Mammary epithelial cell (primary cell): ENCODE measurements at regions of chr16 and their contacts with region 1.

Region 1: GRCh38 chr16:667780-668518 is at the start of gene RHOT2:
- DNase-seq: peak; percentile 86
- H3K4me3 ChIP-seq: peak within 1 kb of the TSS; percentile 79 to 92 (median 88)
- H3K27ac ChIP-seq: peak within 1 kb of the TSS; percentile 51
- H3K4me1 ChIP-seq: peaks cover 26% of the 10 kb centered on the region
- H3K27me3 ChIP-seq: no peaks in the 10 kb centered on the region
- CTCF ChIP-seq: peak; percentile 59 to 64
- total RNA-seq, gene RHOT2: 48.8 to 154 TPM

Region 2: DNA sequence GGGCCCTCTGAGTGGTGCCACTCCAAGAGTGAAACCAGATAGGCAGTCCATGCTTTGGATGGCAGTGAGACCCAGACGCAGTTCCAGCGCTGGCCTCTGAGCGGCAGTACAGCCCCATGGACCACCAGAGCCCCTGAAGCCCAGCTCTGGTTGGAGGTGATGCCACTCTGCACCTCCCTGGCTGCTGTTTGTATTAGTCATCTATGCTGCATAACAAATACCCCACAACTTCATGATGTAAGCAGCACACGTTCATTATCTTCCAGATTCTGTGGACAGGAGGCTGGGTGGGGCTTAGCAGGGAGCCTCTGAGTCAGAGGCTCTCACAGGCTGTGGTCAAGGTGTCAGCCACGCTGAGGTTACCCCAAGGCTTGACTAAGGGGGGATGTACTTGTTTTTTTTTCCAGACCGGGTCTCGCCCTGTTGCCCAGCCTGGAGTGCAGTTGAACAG is 276.0 kb before region 1 on chr16:
- CTCF ChIA-PET with region 1: no interaction called
- dilution Hi-C with region 1: no loop called
- in situ Hi-C with region 1: no loop called
- intact Hi-C with region 1: loop called (anchors 5 kb)
- DNase-seq: peak; percentile 83
- H3K4me3 ChIP-seq: no peak overlapping the region
- H3K27ac ChIP-seq: no peak overlapping the region
- H3K4me1 ChIP-seq: no peaks in the 10 kb centered on the region
- H3K27me3 ChIP-seq: no peaks in the 10 kb centered on the region
- CTCF ChIP-seq: peak; percentile 66 to 95

Region 3: GRCh38 chr16:648781-649589 is 19.0 kb before region 1 on chr16 and contains the start of gene WDR90:
- CTCF ChIA-PET with region 1: no interaction called
- dilution Hi-C with region 1: no loop called
- in situ Hi-C with region 1: no loop called
- intact Hi-C with region 1: loop called (anchors 2 kb)
- DNase-seq: peak; percentile 89
- H3K4me3 ChIP-seq: peak within 1 kb of the TSS; percentile 64 to 68 (median 67)
- H3K27ac ChIP-seq: peak within 1 kb of the TSS; percentile 73
- H3K4me1 ChIP-seq: peaks cover 30% of the 10 kb centered on the region
- H3K27me3 ChIP-seq: no peaks in the 10 kb centered on the region
- CTCF ChIP-seq: no peak
- total RNA-seq, gene WDR90: 7.5 to 41.7 TPM

Region 4: GRCh38 chr16:684067-684794 is 16.3 kb after region 1 on chr16 and contains the start of gene JMJD8:
- CTCF ChIA-PET with region 1: no interaction called
- dilution Hi-C with region 1: no loop called
- in situ Hi-C with region 1: no loop called
- intact Hi-C with region 1: loop called (anchors 2 kb)
- DNase-seq: peak; percentile 96
- H3K4me3 ChIP-seq: peak within 1 kb of the TSS; percentile 55 to 86 (median 68)
- H3K27ac ChIP-seq: peak within 1 kb of the TSS; percentile 52
- H3K4me1 ChIP-seq: peaks cover 53% of the 10 kb centered on the region
- H3K27me3 ChIP-seq: no peaks in the 10 kb centered on the region
- CTCF ChIP-seq: no peak
- total RNA-seq, gene JMJD8: 21.2 to 32.4 TPM

Region 5: GRCh38 chr16:709566-710499 is 41.9 kb after region 1 on chr16:
- CTCF ChIA-PET with region 1: no interaction called
- dilution Hi-C with region 1: no loop called
- in situ Hi-C with region 1: no loop called
- intact Hi-C with region 1: no loop called
- DNase-seq: no peak
- H3K4me3 ChIP-seq: no peak overlapping the region
- H3K27ac ChIP-seq: no peak overlapping the region
- H3K4me1 ChIP-seq: peaks cover 19% of the 10 kb centered on the region
- H3K27me3 ChIP-seq: peaks cover 21% of the 10 kb centered on the region
- CTCF ChIP-seq: no peak